ENCODE measurements at regions of chr9 and their contacts with region 1.

Region 1: GRCh38 chr9:35616681-35617459 is 1.3 kb downstream of the CD72 start:
- DNase-seq: peak; percentile 64
- ATAC-seq: peak; percentile 8
- H3K4me3 Mint-ChIP-seq: peak overlapping the region; percentile 87
- H3K27ac Mint-ChIP-seq: peak overlapping the region; percentile 97
- H3K4me1 Mint-ChIP-seq: peaks cover 98% of the 10 kb centered on the region
- H3K27me3 Mint-ChIP-seq: no peaks in the 10 kb centered on the region
- CTCF ChIP-seq: no peak

Region 2: DNA sequence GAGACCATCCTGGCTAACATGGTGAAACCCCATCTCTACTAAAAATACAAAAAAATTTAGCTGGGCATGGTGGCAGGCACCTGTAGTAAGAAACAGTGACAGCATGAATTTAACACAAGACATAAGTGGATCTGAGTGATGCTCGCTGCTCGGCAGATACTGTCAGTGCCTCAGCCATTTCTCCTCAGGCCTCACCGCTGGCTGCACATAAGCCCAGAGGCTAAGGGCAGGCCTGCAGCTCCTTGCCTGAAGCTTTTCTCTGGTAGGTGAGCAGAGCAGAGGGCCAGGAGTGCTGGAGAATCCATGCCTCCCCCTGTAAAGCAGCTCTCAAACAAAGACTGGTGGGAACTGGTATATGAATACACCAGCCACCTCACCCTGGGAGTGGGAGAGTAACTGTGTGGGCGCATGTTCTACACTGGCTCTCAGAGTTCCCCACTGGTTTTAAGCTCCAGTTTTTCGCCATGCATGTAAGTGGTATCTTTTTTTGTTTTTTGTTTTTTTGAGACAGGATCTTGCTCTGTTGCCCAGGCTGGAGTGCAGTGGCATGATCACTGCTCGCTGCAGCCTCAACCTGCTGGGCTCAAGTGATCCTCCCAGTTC is 11.6 kb after region 1 on chr9:
- CTCF ChIA-PET with region 1: interaction called, 3 read pairs
- POLR2A ChIA-PET with region 1: interaction called, 72 read pairs
- intact Hi-C with region 1: no loop called
- DNase-seq: no peak
- ATAC-seq: no peak
- H3K4me3 Mint-ChIP-seq: no peak overlapping the region
- H3K27ac Mint-ChIP-seq: peak overlapping the region; percentile 70
- H3K4me1 Mint-ChIP-seq: peaks cover 44% of the 10 kb centered on the region
- H3K27me3 Mint-ChIP-seq: no peaks in the 10 kb centered on the region
- CTCF ChIP-seq: no peak

Region 3: GRCh38 chr9:35636135-35636876 is 19.4 kb after region 1 on chr9:
- CTCF ChIA-PET with region 1: interaction called, 8 read pairs
- POLR2A ChIA-PET with region 1: interaction called, 96 read pairs
- intact Hi-C with region 1: loop called (anchors 1 kb)
- DNase-seq: no peak
- ATAC-seq: peak; percentile 64
- H3K4me3 Mint-ChIP-seq: peak overlapping the region; percentile 71
- H3K27ac Mint-ChIP-seq: peak overlapping the region; percentile 94
- H3K4me1 Mint-ChIP-seq: peaks cover 80% of the 10 kb centered on the region
- H3K27me3 Mint-ChIP-seq: no peaks in the 10 kb centered on the region
- CTCF ChIP-seq: no peak

Region 4: GRCh38 chr9:35664531-35665470 is 47.9 kb after region 1 on chr9 and contains the start of gene ARHGEF39:
- CTCF ChIA-PET with region 1: interaction called, 127 read pairs
- POLR2A ChIA-PET with region 1: interaction called, 549 read pairs
- intact Hi-C with region 1: no loop called
- DNase-seq: peak; percentile 60
- ATAC-seq: peak; percentile 71
- H3K4me3 Mint-ChIP-seq: peak within 1 kb of the TSS; percentile 83
- H3K27ac Mint-ChIP-seq: peak within 1 kb of the TSS; percentile 25
- H3K4me1 Mint-ChIP-seq: peaks cover 54% of the 10 kb centered on the region
- H3K27me3 Mint-ChIP-seq: no peaks in the 10 kb centered on the region
- CTCF ChIP-seq: no peak
- total RNA-seq, gene ARHGEF39: 0.59 and 0.89 TPM in 2 replicates

Region 5: DNA sequence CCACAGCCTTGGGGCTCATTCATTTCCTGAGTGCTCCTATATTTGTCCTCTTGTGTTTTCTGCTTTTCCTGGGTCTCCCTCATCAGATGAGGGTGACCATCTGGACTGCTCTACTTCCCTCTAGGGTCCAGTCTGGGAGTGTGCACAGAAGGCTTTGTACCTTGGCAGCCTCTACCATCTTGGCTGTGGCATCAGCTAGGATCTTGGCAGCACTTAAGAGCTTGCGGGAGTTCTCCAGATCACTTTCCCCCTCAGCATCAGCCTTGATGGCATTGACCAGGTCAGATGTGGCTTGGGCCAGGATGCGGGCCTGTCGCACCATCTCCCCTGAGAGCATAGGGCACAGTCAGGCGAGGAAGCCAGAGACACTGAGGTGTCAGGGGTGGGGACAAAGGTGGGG is 99.4 kb after region 1 on chr9:
- CTCF ChIA-PET with region 1: no interaction called
- POLR2A ChIA-PET with region 1: interaction called, 3 read pairs
- intact Hi-C with region 1: loop called (anchors 1 kb)
- DNase-seq: no peak
- ATAC-seq: no peak
- H3K4me3 Mint-ChIP-seq: no peak overlapping the region
- H3K27ac Mint-ChIP-seq: no peak overlapping the region
- H3K4me1 Mint-ChIP-seq: peaks cover 26% of the 10 kb centered on the region
- H3K27me3 Mint-ChIP-seq: no peaks in the 10 kb centered on the region
- CTCF ChIP-seq: no peak

Region 6: GRCh38 chr9:37053684-37054362 is 1437.0 kb after region 1 on chr9:
- CTCF ChIA-PET with region 1: no interaction called
- POLR2A ChIA-PET with region 1: no interaction called
- intact Hi-C with region 1: no loop called
- DNase-seq: no peak
- ATAC-seq: no peak
- H3K4me3 Mint-ChIP-seq: no peak overlapping the region
- H3K27ac Mint-ChIP-seq: no peak overlapping the region
- H3K4me1 Mint-ChIP-seq: peaks cover 19% of the 10 kb centered on the region
- H3K27me3 Mint-ChIP-seq: no peaks in the 10 kb centered on the region
- CTCF ChIP-seq: no peak